GM13976 (cell line): ENCODE measurements at regions of chrX and their contacts with region 1.

Region 1: GRCh38 chrX:132219343-132219768 is at the start of gene RAP2C:
- DNase-seq: peak; percentile 58
- CTCF ChIP-seq: peak; percentile 48

Region 2: DNA sequence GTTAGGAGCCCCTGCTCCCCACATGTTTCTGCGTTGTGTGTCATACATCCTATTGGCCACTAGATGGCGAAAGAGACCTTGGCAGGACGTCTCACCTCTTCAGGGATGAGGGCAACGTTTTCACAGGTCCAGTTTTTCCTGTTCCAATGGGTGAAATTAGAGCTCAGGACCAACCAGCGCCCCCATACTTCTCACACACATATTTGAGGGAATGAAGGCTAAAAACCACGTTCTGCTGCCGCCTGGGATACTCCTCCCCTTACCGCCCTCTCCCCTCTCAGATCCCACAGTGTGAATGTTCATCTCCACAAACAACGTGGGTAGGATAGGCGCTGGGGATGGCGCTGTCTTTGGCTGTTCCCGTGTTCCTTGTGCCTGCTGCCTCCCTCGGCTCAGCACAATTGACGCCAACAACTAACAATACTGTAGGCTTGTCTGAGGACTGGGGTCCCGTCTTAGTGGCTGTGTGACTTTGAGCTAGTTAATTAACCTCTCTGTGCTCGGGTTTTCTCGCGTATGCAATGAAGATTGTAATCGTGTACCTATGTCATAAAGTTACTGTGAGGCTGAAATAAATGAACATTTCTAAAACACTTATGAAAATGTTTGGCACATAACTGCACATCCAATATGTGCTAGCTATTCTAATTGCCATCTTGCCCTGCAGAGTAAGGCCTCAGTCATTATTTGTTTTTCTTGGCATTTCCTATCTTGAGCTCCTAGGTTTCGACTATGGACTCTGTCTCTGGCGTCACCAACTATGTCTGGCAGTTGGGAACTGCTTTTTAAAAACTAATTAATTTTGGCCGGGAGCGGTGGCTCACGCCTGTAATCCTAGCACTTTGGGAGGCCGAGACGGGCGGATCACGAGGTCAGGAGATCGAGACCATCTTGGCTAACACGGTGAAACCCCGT is 377.6 kb before region 1 on chrX:
- in situ Hi-C with region 1: loop called (anchors 10 kb)
- DNase-seq: peak; percentile 73
- CTCF ChIP-seq: peak; percentile 80

Region 3: GRCh38 chrX:132022967-132023895 is 196.1 kb before region 1 on chrX and contains the start of gene STK26:
- in situ Hi-C with region 1: loop called (anchors 10 kb)
- DNase-seq: peak; percentile 81
- CTCF ChIP-seq: no peak

Region 4: GRCh38 chrX:132353430-132353829 is 134.1 kb after region 1 on chrX:
- in situ Hi-C with region 1: no loop called
- DNase-seq: no peak
- CTCF ChIP-seq: no peak